AG04449 (cell line): ENCODE measurements at regions of chr17 and their contacts with region 1.

Region 1: GRCh38 chr17:27293898-27294688 is at the start of gene WSB1:
- DNase-seq: peak; percentile 45
- H3K4me3 ChIP-seq: peak within 1 kb of the TSS; percentile 98
- CTCF ChIP-seq: no peak

Region 2: DNA sequence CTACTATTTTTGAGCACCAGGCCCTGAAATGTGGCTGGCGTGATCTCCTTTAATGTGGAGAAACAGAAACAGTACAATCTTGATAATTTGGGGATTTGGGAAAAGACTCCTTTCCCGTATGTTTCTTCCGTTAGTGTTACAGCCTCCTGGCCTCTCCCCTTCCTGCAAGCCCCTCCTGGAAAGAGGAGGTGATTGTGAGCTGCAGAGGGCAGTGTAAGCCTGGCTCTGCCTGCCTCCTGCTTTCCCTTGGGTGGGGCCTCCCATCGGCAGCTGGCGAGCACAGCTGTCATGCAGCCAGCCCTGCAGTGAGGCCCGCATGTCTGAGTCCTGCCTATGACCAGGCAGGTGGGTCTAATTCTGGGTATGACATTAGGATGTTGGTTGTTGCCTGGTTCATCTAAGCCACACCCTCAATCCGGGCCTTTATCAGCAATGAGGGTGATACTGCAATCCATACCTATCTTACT is 48.8 kb before region 1 on chr17:
- CTCF ChIA-PET with region 1: interaction called, 9 read pairs
- POLR2A ChIA-PET with region 1: interaction called, 11 read pairs
- DNase-seq: peak; percentile 41
- H3K4me3 ChIP-seq: peak overlapping the region; percentile 16
- CTCF ChIP-seq: peak; percentile 73

Region 3: DNA sequence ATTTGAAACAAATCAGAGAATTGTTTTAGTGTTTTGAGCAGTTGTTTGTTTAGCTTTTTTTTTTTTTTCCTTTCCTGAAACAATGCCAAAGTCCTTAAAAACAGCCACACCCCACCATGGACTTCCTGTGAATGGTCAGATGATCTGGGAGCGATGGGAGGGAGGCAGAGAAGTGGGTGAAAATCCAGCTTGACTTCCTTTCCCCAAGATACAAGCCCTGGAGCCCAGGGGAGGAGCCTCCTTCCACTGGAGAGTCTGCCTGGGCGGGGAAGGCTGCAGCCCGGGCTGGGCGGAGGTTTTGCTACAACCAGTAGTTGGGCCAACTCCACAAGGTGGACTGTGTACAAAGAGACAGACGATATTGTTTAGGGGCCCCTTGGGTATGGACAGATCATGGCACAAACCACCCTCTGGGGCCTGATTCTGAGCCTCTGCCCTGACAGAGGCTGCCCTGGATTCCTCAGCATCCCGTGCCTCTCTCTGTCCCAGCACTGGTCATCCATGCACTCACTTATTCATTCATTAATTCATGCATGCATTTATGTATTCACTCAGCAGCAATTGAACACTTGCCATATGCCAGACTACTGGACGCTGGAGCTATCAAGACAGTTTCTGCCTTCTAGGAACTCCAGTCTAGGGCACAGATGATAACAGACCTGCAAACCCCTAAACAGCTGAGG is 29.6 kb after region 1 on chr17:
- CTCF ChIA-PET with region 1: interaction called, 3 read pairs
- POLR2A ChIA-PET with region 1: interaction called, 12 read pairs
- DNase-seq: no peak
- H3K4me3 ChIP-seq: no peak overlapping the region
- CTCF ChIP-seq: no peak